Common myeloid progenitor, CD34-positive (primary cell): ENCODE measurements at regions of chr19 and their contacts with region 1.

Region 1: GRCh38 chr19:16423891-16424290 is 47.9 kb downstream of the EPS15L1 start:
- DNase-seq: no peak
- H3K4me3 ChIP-seq: no peak overlapping the region
- H3K27ac ChIP-seq: no peak overlapping the region
- H3K4me1 ChIP-seq: peaks cover 0 to 4% (median 0%) of the 10 kb centered on the region in 4 experiments
- H3K27me3 ChIP-seq: no peaks in the 10 kb centered on the region

Region 2: DNA sequence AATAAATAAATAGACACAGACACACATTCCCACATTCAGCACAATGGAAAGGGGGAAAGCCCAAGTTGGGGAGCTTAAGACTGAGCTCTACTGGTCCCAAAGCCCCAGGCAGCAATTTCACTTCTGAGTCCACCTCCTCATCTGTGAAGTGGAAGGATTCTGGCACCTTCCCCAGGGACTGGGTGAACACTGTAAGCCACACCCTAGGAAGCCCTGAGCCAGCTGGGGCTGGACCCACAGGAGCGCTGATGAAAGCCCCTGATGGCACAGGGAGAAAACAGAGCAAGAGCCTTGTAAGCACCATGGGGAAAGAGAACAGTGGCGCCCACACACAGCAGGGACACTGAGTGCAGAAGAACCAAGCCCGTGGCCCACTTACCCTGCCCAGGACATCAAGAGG is 10.1 kb after region 1 on chr19:
- CTCF ChIA-PET with region 1: interaction called, 10 read pairs
- POLR2A ChIA-PET with region 1: no interaction called
- DNase-seq: no peak
- H3K4me3 ChIP-seq: no peak overlapping the region
- H3K27ac ChIP-seq: no peak overlapping the region
- H3K4me1 ChIP-seq: peaks cover 9 to 47% (median 41%) of the 10 kb centered on the region in 4 experiments
- H3K27me3 ChIP-seq: no peaks in the 10 kb centered on the region

Region 3: GRCh38 chr19:16462757-16463250 is 38.9 kb after region 1 on chr19:
- CTCF ChIA-PET with region 1: no interaction called
- POLR2A ChIA-PET with region 1: no interaction called
- DNase-seq: no peak
- H3K4me3 ChIP-seq: no peak overlapping the region
- H3K27ac ChIP-seq: peak overlapping the region in 1 of 2 experiments; percentile 4
- H3K4me1 ChIP-seq: peaks cover 0 to 35% (median 25%) of the 10 kb centered on the region in 4 experiments
- H3K27me3 ChIP-seq: no peaks in the 10 kb centered on the region